Activated naive CD4-positive, alpha-beta T cell treated with anti-CD3 and anti-CD28 coated beads, Interleukin-2, amount 10 ng/mL, durations not matched to agents 7 days and 5 days (primary cell): ENCODE measurements at regions of chr1 and their contacts with region 1.

Region 1: DNA sequence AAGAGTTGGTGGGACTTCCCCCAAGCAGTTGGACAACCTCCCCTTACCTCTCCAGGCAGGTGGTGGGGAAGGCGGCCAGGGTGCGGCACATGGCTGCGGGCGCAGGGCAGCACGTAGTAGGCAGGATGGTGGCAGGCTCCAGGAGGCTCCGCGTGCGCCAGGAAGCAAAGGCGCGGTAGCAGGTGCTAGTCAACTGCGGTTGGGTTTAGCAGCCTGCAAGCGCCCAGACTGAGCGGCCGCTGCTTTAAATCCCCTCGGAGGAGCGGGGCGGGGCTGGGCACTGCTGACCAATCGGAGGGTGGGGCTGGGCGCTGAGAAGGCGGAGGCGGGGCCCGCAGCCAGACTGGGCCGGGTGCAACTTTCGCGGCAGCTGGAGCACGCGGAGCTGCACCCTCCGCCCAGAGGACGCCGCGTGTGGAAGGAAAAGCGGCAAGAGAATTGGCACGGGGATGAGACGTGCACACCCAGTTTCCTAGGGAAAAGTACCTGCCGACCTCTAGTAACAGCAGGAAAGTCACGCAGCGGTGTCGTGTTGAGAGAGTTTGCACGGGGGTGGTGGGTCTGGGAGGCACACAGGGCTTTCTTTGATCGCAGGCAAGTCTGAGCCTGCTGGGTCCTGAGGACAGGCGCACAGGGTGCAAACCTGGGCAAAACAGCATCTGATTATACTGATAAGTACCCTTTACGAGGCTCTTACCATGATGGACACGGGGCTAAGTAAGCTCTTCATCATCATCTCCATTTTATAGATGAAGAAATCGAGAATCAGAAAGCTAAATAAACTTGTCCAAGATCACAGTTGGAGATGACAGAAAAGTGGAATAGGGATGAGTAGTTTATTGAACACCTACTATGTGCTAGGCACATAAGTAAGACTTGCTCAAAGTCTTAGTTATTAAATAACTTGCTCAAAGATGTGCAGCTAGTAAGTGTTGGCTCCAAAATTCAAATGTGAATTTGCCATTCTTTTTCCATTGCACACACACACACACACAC is at the start of gene RGS16:
- DNase-seq: peak; percentile 94
- H3K4me3 Mint-ChIP-seq: peak within 1 kb of the TSS; percentile 77
- H3K27ac Mint-ChIP-seq: peak within 1 kb of the TSS; percentile 86
- H3K4me1 Mint-ChIP-seq: peaks cover 19% of the 10 kb centered on the region
- H3K27me3 Mint-ChIP-seq: peaks cover 47% of the 10 kb centered on the region

Region 2: GRCh38 chr1:182476625-182477024 is 127.8 kb before region 1 on chr1:
- CTCF ChIA-PET with region 1: no interaction called
- DNase-seq: no peak
- H3K4me3 Mint-ChIP-seq: no peak overlapping the region
- H3K27ac Mint-ChIP-seq: no peak overlapping the region
- H3K4me1 Mint-ChIP-seq: no peaks in the 10 kb centered on the region
- H3K27me3 Mint-ChIP-seq: peaks cover 10% of the 10 kb centered on the region

Region 3: DNA sequence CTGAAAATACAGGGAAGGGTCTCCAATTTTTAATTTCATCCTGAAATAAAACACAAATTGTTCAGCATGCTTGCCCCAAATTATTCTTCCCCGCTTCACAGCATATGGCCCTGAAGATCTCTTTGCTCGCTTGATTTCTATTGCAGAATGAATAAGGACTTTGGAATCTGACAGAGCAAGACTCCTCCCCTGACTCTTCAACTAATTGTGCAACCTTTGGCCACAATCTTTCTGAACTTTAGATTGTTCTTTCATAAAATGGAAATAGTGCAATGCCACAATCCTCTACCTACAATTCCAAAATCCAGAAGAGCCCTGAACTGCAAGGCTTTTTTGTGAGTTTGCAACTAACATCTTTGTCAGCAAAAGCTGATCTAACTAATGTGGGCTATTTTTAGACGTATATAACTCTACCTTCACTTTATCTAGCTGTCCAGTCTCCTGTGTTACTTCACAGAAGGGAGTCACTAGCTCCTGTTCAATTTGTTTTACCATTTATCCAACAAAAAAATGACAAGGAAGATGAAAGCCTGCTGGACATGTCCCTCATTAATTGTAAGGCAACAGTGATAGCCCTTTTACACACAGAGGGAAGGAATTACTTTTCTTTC is 28.8 kb before region 1 on chr1:
- CTCF ChIA-PET with region 1: no interaction called
- DNase-seq: no peak
- H3K4me3 Mint-ChIP-seq: no peak overlapping the region
- H3K27ac Mint-ChIP-seq: no peak overlapping the region
- H3K4me1 Mint-ChIP-seq: no peaks in the 10 kb centered on the region
- H3K27me3 Mint-ChIP-seq: no peaks in the 10 kb centered on the region

Region 4: GRCh38 chr1:182588500-182589452 is 15.7 kb before region 1 on chr1 and contains the start of gene RNASEL:
- CTCF ChIA-PET with region 1: interaction called, 27 read pairs
- DNase-seq: peak; percentile 65
- H3K4me3 Mint-ChIP-seq: peak within 1 kb of the TSS; percentile 98
- H3K27ac Mint-ChIP-seq: peak within 1 kb of the TSS; percentile 99
- H3K4me1 Mint-ChIP-seq: peaks cover 36% of the 10 kb centered on the region
- H3K27me3 Mint-ChIP-seq: peaks cover 16% of the 10 kb centered on the region

Region 5: DNA sequence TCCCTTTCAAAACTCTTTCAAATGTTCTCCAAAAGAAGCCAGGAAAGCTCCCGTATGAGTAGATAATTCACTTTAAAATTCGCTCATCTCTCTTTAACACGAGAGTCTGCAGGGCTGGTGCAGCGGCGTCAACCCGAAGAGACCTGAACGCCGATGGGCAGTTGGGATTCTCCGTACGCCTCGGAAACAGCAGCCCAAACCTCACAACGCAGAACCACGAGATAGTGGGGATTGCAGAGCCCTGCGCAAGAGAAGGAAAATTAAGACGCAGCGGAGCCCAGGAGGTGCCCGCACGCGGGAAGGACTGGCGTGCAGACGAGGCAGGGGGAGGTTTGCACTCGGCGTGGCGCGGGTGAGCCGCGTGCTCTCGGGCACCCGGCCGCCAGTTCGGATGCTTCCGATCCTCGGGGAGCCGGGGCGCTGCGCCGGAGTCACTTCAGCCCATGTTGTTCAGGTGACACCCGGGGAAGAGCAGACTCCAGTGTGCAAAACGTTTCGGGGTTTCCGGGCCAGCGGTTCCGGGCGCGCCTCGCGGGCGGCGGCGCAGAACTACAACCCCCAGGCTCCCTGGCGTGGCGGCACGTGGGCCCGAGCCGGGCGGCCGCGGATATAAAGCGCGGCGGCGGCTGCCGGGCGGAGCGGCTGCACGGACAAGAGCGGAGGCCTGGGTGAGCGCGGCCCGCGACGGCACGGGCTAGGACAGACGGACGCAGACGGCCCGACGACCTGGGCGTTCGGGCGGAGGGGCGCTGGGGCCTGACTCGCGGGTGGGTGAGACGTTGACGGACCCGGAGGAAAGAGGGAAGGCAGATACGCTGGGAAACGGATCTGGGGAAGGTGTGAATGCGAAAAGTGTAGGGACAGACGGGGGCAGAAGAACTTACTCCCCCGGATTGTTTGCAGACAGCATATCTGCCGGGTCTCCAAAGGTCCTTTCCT is 184.9 kb after region 1 on chr1 and contains the start of gene NPL:
- CTCF ChIA-PET with region 1: interaction called, 717 read pairs
- DNase-seq: peak; percentile 90
- H3K4me3 Mint-ChIP-seq: peak within 1 kb of the TSS; percentile 83
- H3K27ac Mint-ChIP-seq: peak within 1 kb of the TSS; percentile 60
- H3K4me1 Mint-ChIP-seq: peaks cover 12% of the 10 kb centered on the region
- H3K27me3 Mint-ChIP-seq: peaks cover 36% of the 10 kb centered on the region